Activated B cell treated with CpG ODN at 0.5 μM for 24 hours (primary cell): ENCODE measurements at regions of chr1 and their contacts with region 1.

Region 1: DNA sequence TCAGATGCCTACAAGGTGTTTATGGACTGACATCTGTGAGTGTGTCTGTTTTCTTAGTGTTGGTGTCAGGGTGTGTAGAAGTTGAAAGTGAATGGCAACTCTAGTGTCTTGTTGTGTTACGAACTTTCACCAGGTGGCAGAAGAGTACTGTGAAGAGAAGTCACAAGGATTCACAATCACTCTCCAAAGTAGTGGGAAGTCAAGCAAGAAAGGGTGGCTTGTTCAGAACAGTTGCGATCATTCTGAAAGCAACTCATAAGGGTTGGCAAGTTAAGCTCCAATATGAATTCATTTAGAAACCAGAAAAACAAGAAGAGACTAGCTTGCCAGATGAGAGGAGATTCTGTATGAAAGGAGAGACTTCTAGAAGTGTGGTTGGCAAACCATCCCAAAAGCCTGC is 86.1 kb downstream of the FASLG start:
- DNase-seq: no peak
- ATAC-seq: peak; percentile 86
- H3K4me3 Mint-ChIP-seq: no peak overlapping the region
- H3K27ac Mint-ChIP-seq: peak overlapping the region; percentile 43
- H3K4me1 Mint-ChIP-seq: peaks cover 34% of the 10 kb centered on the region
- H3K27me3 Mint-ChIP-seq: peaks cover 4% of the 10 kb centered on the region
- CTCF ChIP-seq: peak; percentile 42

Region 2: GRCh38 chr1:172895050-172895460 is 150.0 kb after region 1 on chr1:
- CTCF ChIA-PET with region 1: no interaction called
- POLR2A ChIA-PET with region 1: interaction called, 3 read pairs
- intact Hi-C with region 1: loop called (anchors 2 kb)
- DNase-seq: no peak
- ATAC-seq: peak; percentile 68
- H3K4me3 Mint-ChIP-seq: peak overlapping the region; percentile 70
- H3K27ac Mint-ChIP-seq: peak overlapping the region; percentile 86
- H3K4me1 Mint-ChIP-seq: peaks cover 40% of the 10 kb centered on the region
- H3K27me3 Mint-ChIP-seq: no peaks in the 10 kb centered on the region
- CTCF ChIP-seq: no peak

Region 3: DNA sequence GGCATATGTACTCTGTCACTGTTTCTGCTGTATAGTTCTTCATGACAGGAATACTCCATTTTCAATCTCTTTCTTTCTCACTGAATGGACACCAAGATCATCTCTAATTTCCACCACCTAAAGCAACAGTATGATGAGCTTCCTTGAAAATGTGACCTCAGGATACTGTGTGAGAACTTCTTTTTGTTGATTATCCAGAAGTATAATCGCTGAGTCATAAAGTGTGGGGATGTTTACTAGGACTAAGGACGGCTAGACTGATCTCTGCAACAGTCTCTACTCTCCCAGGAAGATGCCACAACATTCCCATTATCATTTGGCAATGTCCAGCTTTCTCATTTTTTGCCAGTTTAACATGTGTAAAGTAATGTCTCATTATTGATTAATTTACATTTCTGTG is 235.4 kb after region 1 on chr1:
- CTCF ChIA-PET with region 1: no interaction called
- POLR2A ChIA-PET with region 1: no interaction called
- intact Hi-C with region 1: no loop called
- DNase-seq: no peak
- ATAC-seq: no peak
- H3K4me3 Mint-ChIP-seq: no peak overlapping the region
- H3K27ac Mint-ChIP-seq: no peak overlapping the region
- H3K4me1 Mint-ChIP-seq: peaks cover 10% of the 10 kb centered on the region
- H3K27me3 Mint-ChIP-seq: no peaks in the 10 kb centered on the region
- CTCF ChIP-seq: no peak

Region 4: GRCh38 chr1:173202430-173203145 is 457.6 kb after region 1 on chr1:
- CTCF ChIA-PET with region 1: interaction called, 249 read pairs
- POLR2A ChIA-PET with region 1: interaction called, 13 read pairs
- intact Hi-C with region 1: loop called (anchors 1 kb)
- DNase-seq: no peak
- ATAC-seq: no peak
- H3K4me3 Mint-ChIP-seq: no peak overlapping the region
- H3K27ac Mint-ChIP-seq: no peak overlapping the region
- H3K4me1 Mint-ChIP-seq: peaks cover 50% of the 10 kb centered on the region
- H3K27me3 Mint-ChIP-seq: no peaks in the 10 kb centered on the region
- CTCF ChIP-seq: no peak

Region 5: GRCh38 chr1:173476664-173477285 is 731.8 kb after region 1 on chr1:
- CTCF ChIA-PET with region 1: interaction called, 4 read pairs
- POLR2A ChIA-PET with region 1: interaction called, 3 read pairs
- intact Hi-C with region 1: loop called (anchors 1 kb)
- DNase-seq: peak; percentile 70
- ATAC-seq: peak; percentile 94
- H3K4me3 Mint-ChIP-seq: peak overlapping the region; percentile 92
- H3K27ac Mint-ChIP-seq: peak overlapping the region; percentile 95
- H3K4me1 Mint-ChIP-seq: peaks cover 40% of the 10 kb centered on the region
- H3K27me3 Mint-ChIP-seq: no peaks in the 10 kb centered on the region
- CTCF ChIP-seq: no peak

Region 6: GRCh38 chr1:173960625-173961024 is 1215.6 kb after region 1 on chr1:
- CTCF ChIA-PET with region 1: no interaction called
- POLR2A ChIA-PET with region 1: no interaction called
- intact Hi-C with region 1: loop called (anchors 10 kb)
- DNase-seq: no peak
- ATAC-seq: no peak
- H3K4me3 Mint-ChIP-seq: no peak overlapping the region
- H3K27ac Mint-ChIP-seq: no peak overlapping the region
- H3K4me1 Mint-ChIP-seq: no peaks in the 10 kb centered on the region
- H3K27me3 Mint-ChIP-seq: no peaks in the 10 kb centered on the region
- CTCF ChIP-seq: no peak

Region 7: DNA sequence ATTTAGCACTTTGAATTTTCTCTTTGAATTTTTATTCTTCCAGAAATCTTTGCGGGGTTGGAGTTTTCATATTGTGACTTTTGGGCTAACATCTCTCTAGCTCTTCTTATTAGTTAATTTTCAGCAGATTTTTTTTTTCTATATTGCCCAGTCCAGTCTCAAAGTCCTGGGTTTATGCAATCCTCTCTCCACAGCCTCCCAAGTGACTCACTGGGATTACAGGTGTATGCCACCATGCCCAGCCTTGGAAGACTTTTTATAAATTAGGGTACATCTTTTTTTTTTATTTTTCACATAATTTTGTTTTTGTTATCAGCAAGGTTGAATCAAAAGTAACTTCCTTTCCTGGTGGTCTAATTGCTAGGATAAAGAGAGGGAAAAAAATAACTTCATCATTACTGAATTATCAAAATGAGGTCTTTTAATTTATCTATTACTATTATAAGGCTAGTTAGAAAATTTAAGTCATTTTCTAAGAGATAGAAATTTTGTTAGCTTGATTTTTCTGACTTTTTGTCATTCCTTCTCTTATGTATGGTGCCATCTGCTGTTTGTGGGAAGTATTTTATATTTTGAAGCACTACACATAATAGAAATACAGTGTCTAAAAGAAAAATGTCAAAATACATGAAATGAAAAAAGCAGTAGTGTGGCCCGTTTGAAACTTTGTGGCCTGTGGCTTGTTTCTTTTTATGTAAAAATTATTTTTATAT is 1981.3 kb after region 1 on chr1:
- CTCF ChIA-PET with region 1: no interaction called
- POLR2A ChIA-PET with region 1: no interaction called
- intact Hi-C with region 1: loop called (anchors 5 kb)
- DNase-seq: no peak
- ATAC-seq: no peak
- H3K4me3 Mint-ChIP-seq: no peak overlapping the region
- H3K27ac Mint-ChIP-seq: no peak overlapping the region
- H3K4me1 Mint-ChIP-seq: peaks cover 4% of the 10 kb centered on the region
- H3K27me3 Mint-ChIP-seq: no peaks in the 10 kb centered on the region
- CTCF ChIP-seq: no peak